ENCODE measurements at regions of chr17 and their contacts with region 1.

Region 1: DNA sequence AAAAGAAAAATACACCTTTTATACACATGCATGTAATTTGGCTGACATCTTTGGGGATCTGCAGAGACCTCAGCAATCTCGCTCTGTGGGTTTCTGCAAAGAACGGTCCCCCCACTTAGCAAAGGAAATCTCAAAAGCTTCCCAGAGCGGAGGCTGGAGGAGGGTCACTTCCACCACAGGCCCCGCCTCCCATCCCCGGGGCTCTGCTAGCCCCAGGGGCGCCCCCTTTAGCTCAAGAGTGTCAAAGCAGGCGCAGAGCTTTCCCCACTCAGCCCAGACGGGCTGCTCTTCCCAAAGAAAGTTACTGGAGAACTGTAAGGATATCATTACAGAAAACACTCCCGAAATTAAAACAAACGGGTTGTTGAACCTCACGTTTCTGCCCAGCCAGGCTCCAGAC is 11.4 kb downstream of the SLC13A5 start:
- DNase-seq: no peak
- ATAC-seq: peak; percentile 9 to 19 (median 12)
- H3K4me3 ChIP-seq: no peak overlapping the region
- H3K27ac ChIP-seq: peak overlapping the region; percentile 56 to 97 (median 87)
- H3K4me1 ChIP-seq: peaks cover 0 to 86% (median 44%) of the 10 kb centered on the region in 4 donors
- H3K27me3 ChIP-seq: no peaks in the 10 kb centered on the region
- CTCF ChIP-seq: peak; percentile 16 to 53 (median 34)
- POLR2A ChIP-seq: no peak

Region 2: DNA sequence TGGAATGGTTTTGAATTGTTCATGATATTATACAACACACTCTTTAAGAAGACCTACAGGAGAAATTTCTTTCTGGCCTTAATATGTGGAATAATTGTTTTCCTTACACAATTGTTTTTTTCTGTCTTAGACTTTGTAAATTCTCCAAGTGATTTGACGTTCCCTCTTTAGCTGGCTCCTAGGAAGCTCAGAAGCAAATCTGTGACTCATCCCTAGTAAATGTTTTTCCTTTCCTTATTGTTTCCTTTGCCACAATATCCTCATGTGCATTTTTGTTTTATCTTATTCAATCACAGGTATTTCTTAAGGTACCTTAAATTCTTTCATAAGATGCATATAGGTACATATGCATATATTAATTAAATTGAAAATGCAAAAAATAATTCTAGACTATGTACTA is 74.7 kb before region 1 on chr17:
- intact Hi-C with region 1: no loop called
- DNase-seq: no peak
- ATAC-seq: no peak
- H3K4me3 ChIP-seq: no peak overlapping the region
- H3K27ac ChIP-seq: no peak overlapping the region
- H3K4me1 ChIP-seq: no peaks in the 10 kb centered on the region
- H3K27me3 ChIP-seq: no peaks in the 10 kb centered on the region
- CTCF ChIP-seq: no peak
- POLR2A ChIP-seq: no peak

Region 3: GRCh38 chr17:6796887-6797490 is 95.3 kb after region 1 on chr17:
- intact Hi-C with region 1: loop called in 1 of 2 experiments (anchors 10 kb)
- DNase-seq: no peak
- ATAC-seq: peak in 2 of 4 donors; percentile 22 to 61
- H3K4me3 ChIP-seq: no peak overlapping the region
- H3K27ac ChIP-seq: peak overlapping the region; percentile 65 to 86 (median 68)
- H3K4me1 ChIP-seq: peaks cover 0 to 55% (median 13%) of the 10 kb centered on the region in 4 donors
- H3K27me3 ChIP-seq: no peaks in the 10 kb centered on the region
- CTCF ChIP-seq: no peak
- POLR2A ChIP-seq: no peak

Measured in right lobe of liver (tissue), 6 donors.